Left ventricle myocardium superior (tissue), 1 donor: ENCODE measurements at regions of chr9 and their contacts with region 1.

Region 1: DNA sequence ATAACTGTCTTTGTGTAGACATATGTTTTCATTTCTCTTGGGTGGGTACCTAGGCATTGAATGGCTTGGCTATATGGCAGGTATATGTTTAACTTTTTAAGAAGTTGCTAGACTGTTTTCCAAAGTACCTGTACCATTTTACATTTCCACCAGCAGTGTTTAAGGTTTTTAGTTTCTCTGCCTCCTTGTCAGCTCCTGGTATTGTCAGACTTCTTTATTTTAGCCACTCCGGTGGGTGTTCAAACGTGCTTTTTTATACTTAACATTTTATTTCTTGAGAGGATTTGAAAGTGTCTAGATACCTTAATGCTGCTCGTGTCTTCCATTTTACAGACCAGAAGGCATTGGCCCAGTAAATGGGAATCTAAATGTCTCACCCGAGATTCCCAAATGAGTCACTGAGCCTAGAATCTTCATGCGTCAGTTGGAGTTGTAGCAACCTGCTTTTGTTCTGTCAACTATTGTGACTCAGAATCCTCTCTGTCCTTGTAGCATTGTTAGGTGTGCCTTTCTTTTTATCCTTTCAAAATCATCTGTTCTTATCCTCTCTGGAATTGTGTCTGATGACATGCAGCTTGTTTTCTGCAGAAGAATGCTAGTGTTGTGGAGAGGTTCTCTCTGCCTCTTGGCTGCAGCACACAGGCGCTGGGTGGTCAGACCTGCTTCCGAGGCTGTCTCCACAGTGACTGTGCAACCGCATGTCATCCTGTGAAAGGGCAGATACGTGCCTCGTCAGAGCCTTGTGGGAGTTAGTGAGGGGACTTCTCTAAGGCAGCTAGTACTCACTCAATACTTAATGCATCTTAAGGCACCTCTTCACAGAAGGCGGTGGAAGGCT is 291.8 kb downstream of the AOPEP start:
- DNase-seq: peak; percentile 63
- ATAC-seq: peak; percentile 72

Region 2: GRCh38 chr9:94498801-94499453 is 519.4 kb before region 1 on chr9:
- intact Hi-C with region 1: no loop called
- DNase-seq: no peak
- ATAC-seq: no peak

Region 3: GRCh38 chr9:94870793-94871558 is 147.3 kb before region 1 on chr9:
- intact Hi-C with region 1: loop called (anchors 10 kb)
- DNase-seq: peak; percentile 76
- ATAC-seq: peak; percentile 88

Region 4: DNA sequence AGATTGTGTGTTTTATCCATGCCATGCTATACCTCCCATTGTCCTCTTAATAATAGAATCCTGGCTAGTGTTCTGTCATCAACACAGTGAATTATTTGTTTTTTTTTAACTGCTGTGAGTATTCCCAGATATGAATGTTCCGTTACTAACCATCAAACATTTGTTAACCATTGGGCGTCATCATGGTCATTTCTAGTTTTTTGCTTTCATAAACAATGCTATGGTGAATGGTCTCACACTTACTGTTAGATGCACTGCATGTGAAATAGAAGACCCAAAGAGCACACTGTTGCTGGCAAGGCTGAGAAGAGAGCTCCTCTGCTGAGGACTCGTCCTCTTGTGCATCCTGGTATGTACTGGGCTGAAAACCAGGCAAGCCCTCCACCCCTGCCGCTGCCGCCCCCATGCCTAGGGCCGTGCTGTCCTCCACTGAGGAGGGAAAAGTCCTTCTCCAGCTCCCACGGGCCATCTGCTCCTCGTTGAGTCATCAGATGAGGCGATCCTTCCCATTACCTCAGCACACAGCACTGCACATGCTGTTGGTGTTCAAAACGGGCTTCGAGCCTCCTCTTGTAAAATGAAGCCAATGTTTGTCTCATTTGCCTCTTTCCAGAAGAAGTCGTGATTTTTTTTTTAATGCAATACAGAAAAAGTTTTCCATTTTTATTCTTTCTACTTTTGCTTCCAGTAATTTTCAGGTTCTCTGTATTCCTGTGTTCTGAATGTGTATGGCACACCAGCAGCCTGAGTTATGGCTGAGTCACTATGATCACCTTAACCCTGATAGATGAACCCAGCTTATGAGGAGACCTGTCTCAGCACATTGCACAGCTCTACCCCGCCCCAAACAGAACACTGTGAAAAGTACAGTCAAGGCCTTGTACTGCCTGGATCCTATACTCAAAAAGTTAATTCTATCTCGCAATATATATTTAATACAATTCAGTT is 72.8 kb before region 1 on chr9:
- intact Hi-C with region 1: no loop called
- DNase-seq: peak; percentile 62
- ATAC-seq: peak; percentile 86